ENCODE measurements at regions of chr1 and their contacts with region 1.

Region 1: GRCh38 chr1:26391450-26391849 is 18.9 kb upstream of the ZNF683 start:
- DNase-seq: peak; percentile 64
- H3K4me3 Mint-ChIP-seq: no peak overlapping the region
- H3K27ac Mint-ChIP-seq: peak overlapping the region; percentile 9
- H3K4me1 Mint-ChIP-seq: peaks cover 34% of the 10 kb centered on the region
- H3K27me3 Mint-ChIP-seq: no peaks in the 10 kb centered on the region

Region 2: GRCh38 chr1:26372039-26372438 is 19.4 kb before region 1 on chr1:
- CTCF ChIA-PET with region 1: interaction called, 10 read pairs
- POLR2A ChIA-PET with region 1: interaction called, 3 read pairs
- intact Hi-C with region 1: no loop called
- DNase-seq: no peak
- H3K4me3 Mint-ChIP-seq: no peak overlapping the region
- H3K27ac Mint-ChIP-seq: no peak overlapping the region
- H3K4me1 Mint-ChIP-seq: peaks cover 72% of the 10 kb centered on the region
- H3K27me3 Mint-ChIP-seq: no peaks in the 10 kb centered on the region

Measured in activated CD4-positive, alpha-beta memory T cell treated with anti-CD3 and anti-CD28 coated beads for 36 hours (primary cell).